ENCODE measurements at regions of chr6 and their contacts with region 1.

Region 1: GRCh38 chr6:99530627-99531026 is 15.4 kb upstream of the USP45 start:
- DNase-seq: no peak
- H3K4me3 ChIP-seq: no peak overlapping the region
- H3K27ac ChIP-seq: no peak overlapping the region
- H3K4me1 ChIP-seq: no peaks in the 10 kb centered on the region
- H3K27me3 ChIP-seq: no peaks in the 10 kb centered on the region
- CTCF ChIP-seq: no peak
- POLR2A ChIP-seq: no peak

Region 2: DNA sequence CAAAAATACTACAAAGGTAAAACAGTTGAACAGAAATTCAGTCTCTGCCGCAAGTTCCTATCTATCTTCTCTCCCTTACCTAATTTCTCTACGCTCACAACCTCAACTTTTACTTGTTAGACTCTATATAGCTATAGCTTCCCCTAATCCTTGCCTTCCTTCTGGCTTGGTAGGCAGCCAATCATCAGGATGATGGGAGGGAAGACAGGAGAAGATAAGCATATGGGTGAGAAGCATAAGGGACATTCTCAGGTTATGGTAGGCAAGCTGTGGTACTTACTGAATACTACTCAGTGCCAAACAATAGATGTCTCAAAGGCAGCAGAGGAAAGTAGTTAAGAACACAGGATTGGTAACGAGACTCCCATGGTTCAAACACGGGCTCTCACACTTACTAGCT is 30.0 kb after region 1 on chr6:
- intact Hi-C with region 1: loop called (anchors 2 kb)
- DNase-seq: no peak
- H3K4me3 ChIP-seq: no peak overlapping the region
- H3K27ac ChIP-seq: no peak overlapping the region
- H3K4me1 ChIP-seq: peaks cover 0 to 3% of the 10 kb centered on the region in 2 donors
- H3K27me3 ChIP-seq: no peaks in the 10 kb centered on the region
- CTCF ChIP-seq: no peak
- POLR2A ChIP-seq: no peak

Region 3: DNA sequence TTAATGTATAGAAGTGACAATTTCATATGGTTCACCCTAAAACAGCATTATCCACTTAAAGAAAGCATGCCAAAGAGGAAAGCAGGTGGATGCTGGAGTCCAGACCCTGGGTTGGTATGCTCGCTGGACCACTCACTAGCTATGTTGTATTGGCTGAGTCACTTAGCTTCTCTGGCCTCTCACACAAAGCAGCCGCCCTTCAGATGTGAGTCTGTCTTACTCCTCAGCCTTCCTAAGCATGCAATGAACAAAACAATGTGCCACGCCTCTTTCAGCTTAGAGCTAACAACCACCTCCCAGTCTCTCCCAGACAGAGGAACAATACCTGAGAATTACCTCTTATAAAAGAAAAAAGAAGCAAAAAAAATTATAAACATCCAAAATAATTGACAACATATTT is 904.7 kb after region 1 on chr6:
- intact Hi-C with region 1: no loop called
- DNase-seq: no peak
- H3K4me3 ChIP-seq: no peak overlapping the region
- H3K27ac ChIP-seq: no peak overlapping the region
- H3K4me1 ChIP-seq: no peaks in the 10 kb centered on the region
- H3K27me3 ChIP-seq: no peaks in the 10 kb centered on the region
- CTCF ChIP-seq: no peak
- POLR2A ChIP-seq: no peak